Heart right ventricle (tissue), 16 donors: ENCODE measurements at regions of chr4 and their contacts with region 1.

Region 1: DNA sequence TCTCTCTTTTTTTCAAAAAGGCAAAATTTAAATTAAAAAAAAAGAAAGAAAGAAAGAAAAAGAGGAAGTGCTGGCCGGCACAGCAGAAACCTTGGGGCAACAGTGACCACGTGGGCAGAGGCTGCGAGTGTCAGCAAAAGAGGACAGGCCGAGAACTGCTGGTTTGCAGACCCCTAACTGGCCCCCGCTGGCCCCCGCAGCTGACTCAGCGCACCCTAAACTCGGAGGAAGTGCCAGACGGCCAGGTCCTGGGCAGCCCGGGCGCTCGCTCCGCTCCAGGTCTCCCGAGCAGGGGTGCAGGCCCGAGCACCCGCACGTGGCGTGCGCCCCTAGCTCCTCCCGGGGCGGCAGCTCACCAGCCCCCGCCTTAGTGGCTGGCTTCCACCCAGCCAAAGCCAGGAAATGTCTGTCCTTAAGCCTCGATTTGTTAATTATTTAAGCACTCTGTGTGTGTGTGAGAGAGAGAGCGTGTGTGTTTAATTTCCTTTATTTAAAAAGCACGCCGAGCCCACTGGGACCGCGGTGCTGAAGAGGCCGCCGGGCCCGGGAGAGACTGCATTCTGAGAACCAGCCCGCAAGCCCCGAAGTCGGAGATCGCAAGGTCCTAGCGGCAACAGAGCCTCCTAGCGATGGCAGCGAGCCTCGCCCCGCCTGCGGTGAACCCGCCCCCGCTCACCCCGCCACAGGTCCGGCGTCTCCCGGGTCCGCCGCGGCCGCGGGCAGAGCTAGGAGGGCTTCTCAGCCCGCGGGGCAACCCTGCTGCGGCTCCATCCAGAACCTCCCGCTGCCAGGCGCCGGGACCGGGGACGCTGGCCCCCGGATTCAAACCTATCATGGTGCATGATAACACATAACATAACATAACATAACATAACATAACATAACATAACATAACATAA is 46.0 kb upstream of the CDKN2AIP start:
- DNase-seq: peak; percentile 56 to 74
- ATAC-seq: peak; percentile 81 to 94 (median 88)
- H3K4me3 ChIP-seq: peak overlapping the region; percentile 28 to 64 (median 62)
- H3K27ac ChIP-seq: peak overlapping the region in 6 of 10 donors; percentile 15 to 86 (median 38)
- H3K4me1 ChIP-seq: peaks cover 0 to 41% (median 8%) of the 10 kb centered on the region in 9 donors
- H3K27me3 ChIP-seq: no peaks in the 10 kb centered on the region
- CTCF ChIP-seq: peak; percentile 21 to 76 (median 55)

Region 2: DNA sequence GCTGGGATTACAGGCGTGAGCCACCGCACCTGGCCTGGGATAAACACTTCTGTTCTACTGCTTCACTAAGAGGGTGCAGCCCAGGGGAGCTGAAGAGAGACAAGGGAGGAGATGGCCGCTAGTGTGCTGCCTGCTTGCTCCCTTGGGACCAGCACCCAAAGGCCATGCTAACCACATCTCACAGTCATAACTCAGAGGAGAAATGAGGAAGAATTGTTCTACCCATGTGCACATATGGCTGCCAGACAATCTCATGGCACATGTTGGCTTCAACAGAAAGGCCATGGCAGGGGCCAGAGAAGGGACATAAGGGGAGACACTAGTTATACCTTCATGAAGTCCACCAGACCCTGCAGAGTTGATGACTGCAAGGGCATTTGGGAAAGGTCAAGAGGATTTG is 100.8 kb before region 1 on chr4:
- intact Hi-C with region 1: loop called in 1 of 10 experiments (anchors 10 kb)
- DNase-seq: no peak
- ATAC-seq: no peak
- H3K4me3 ChIP-seq: no peak overlapping the region
- H3K27ac ChIP-seq: no peak overlapping the region
- H3K4me1 ChIP-seq: peaks cover 0 to 13% (median 0%) of the 10 kb centered on the region in 9 donors
- H3K27me3 ChIP-seq: no peaks in the 10 kb centered on the region
- CTCF ChIP-seq: no peak

Region 3: DNA sequence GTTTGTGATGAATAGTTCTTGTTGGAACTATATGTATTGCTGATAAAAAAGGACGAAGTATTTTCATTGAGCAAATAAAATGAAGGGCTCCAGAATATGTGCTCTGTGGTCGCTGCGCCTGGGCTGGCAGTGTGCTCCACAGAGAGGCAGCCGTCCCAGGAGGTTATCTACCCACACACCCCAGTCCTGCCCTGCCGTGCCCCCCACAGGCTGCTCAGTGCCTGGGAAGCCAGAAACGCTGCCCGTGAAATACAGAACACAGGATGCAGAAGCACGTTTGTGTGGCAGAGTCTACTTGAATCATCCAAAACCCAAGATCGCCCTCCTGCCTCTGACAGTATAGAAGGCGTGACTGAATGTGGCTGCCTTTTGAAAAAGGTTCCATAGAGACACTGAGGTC is 79.8 kb before region 1 on chr4:
- intact Hi-C with region 1: loop called in 1 of 10 experiments (anchors 10 kb)
- DNase-seq: no peak
- ATAC-seq: no peak
- H3K4me3 ChIP-seq: no peak overlapping the region
- H3K27ac ChIP-seq: no peak overlapping the region
- H3K4me1 ChIP-seq: no peaks in the 10 kb centered on the region
- H3K27me3 ChIP-seq: no peaks in the 10 kb centered on the region
- CTCF ChIP-seq: no peak